Caco-2 (cell line): ENCODE measurements at regions of chr1 and their contacts with region 1.

Region 1: GRCh38 chr1:203210990-203211389 is 18.5 kb downstream of the CHIT1 start:
- DNase-seq: peak; percentile 78 to 82
- H3K4me3 ChIP-seq: no peak overlapping the region
- H3K4me3 Mint-ChIP-seq: peak overlapping the region; percentile 3
- H3K27ac Mint-ChIP-seq: peak overlapping the region; percentile 69
- H3K4me1 ChIP-seq: peaks cover 69% of the 10 kb centered on the region
- H3K4me1 Mint-ChIP-seq: peaks cover 41% of the 10 kb centered on the region
- H3K27me3 ChIP-seq: no peaks in the 10 kb centered on the region
- H3K27me3 Mint-ChIP-seq: no peaks in the 10 kb centered on the region
- CTCF ChIP-seq: no peak

Region 2: GRCh38 chr1:203177470-203178039 is 33.4 kb before region 1 on chr1:
- CTCF ChIA-PET with region 1: interaction called, 14 read pairs
- POLR2A ChIA-PET with region 1: no interaction called
- intact Hi-C with region 1: loop called (anchors 1 kb)
- DNase-seq: peak in 1 of 2 experiments; percentile 55
- H3K4me3 ChIP-seq: no peak overlapping the region
- H3K4me3 Mint-ChIP-seq: peak overlapping the region; percentile 65
- H3K27ac Mint-ChIP-seq: peak overlapping the region; percentile 95
- H3K4me1 ChIP-seq: peaks cover 71% of the 10 kb centered on the region
- H3K4me1 Mint-ChIP-seq: peaks cover 67% of the 10 kb centered on the region
- H3K27me3 ChIP-seq: no peaks in the 10 kb centered on the region
- H3K27me3 Mint-ChIP-seq: no peaks in the 10 kb centered on the region
- CTCF ChIP-seq: no peak

Region 3: DNA sequence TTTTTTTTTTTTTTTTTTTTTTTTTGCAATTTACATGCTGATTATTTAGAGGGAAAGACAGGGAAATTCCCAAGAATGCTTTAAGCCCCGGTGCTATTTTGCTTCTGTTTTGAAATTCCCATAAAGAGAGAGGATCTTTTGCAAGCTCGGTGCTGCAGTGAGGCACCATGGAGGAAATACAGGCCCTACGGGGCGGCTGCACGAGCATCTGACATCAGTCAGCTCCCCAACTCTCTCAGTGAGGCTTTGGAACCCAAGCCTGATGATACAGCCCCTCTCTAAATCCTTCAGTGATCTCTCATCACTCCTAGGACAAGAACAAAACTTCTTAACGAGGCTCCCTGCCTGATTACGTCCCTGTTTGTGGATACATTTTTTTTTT is 23.7 kb before region 1 on chr1:
- CTCF ChIA-PET with region 1: interaction called, 16 read pairs
- POLR2A ChIA-PET with region 1: interaction called, 5 read pairs
- intact Hi-C with region 1: loop called (anchors 1 kb)
- DNase-seq: no peak
- H3K4me3 ChIP-seq: no peak overlapping the region
- H3K4me3 Mint-ChIP-seq: peak overlapping the region; percentile 76
- H3K27ac Mint-ChIP-seq: peak overlapping the region; percentile 86
- H3K4me1 ChIP-seq: peaks cover 68% of the 10 kb centered on the region
- H3K4me1 Mint-ChIP-seq: peaks cover 62% of the 10 kb centered on the region
- H3K27me3 ChIP-seq: no peaks in the 10 kb centered on the region
- H3K27me3 Mint-ChIP-seq: no peaks in the 10 kb centered on the region
- CTCF ChIP-seq: no peak

Region 4: DNA sequence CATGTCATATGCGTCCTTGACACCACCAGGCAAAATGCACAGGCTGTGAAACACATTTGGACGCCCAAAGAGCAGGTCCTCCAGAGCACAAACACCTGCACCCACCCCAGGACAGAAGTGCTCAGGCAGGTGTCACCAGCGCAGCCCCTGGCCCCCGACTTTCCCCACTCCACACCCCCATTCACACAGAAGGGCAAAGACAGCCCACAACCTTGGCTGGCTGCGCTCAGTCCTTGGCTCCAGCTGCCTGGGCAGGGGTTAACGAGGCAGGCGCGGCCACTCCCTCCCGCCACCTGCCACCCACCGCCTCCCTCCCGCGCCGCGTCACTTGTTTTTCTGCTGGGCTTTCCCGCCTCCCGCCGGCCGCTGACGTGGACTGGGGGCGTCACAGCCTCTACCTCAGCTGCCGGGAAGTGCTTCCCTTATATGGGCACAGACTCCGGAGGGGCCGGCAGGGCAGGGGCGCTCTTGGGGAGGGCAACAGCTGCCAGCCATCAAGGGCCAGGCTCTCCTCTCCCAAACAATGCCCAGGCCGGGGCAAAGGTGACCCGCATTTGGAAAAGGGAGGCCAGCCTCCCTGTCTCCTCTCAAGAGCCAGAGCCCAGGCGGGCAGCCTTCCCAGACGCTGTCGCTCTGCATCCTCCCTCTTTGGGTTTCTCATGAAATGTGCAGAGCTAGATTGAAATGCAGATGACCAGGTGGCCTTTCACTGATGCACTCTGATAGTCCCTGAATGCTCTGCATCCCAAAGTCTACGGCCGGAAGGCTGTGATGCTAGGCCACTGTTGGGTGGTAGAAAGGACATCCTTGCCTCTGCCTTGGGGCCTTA is 79.5 kb after region 1 on chr1:
- CTCF ChIA-PET with region 1: no interaction called
- POLR2A ChIA-PET with region 1: no interaction called
- intact Hi-C with region 1: no loop called
- DNase-seq: peak; percentile 96 to 97
- H3K4me3 ChIP-seq: peak overlapping the region; percentile 32
- H3K4me3 Mint-ChIP-seq: peak overlapping the region; percentile 70
- H3K27ac Mint-ChIP-seq: peak overlapping the region; percentile 94
- H3K4me1 ChIP-seq: peaks cover 41% of the 10 kb centered on the region
- H3K4me1 Mint-ChIP-seq: peaks cover 30% of the 10 kb centered on the region
- H3K27me3 ChIP-seq: no peaks in the 10 kb centered on the region
- H3K27me3 Mint-ChIP-seq: no peaks in the 10 kb centered on the region
- CTCF ChIP-seq: no peak